CD4-positive, alpha-beta memory T cell (primary cell): ENCODE measurements at regions of chr10 and their contacts with region 1.

Region 1: DNA sequence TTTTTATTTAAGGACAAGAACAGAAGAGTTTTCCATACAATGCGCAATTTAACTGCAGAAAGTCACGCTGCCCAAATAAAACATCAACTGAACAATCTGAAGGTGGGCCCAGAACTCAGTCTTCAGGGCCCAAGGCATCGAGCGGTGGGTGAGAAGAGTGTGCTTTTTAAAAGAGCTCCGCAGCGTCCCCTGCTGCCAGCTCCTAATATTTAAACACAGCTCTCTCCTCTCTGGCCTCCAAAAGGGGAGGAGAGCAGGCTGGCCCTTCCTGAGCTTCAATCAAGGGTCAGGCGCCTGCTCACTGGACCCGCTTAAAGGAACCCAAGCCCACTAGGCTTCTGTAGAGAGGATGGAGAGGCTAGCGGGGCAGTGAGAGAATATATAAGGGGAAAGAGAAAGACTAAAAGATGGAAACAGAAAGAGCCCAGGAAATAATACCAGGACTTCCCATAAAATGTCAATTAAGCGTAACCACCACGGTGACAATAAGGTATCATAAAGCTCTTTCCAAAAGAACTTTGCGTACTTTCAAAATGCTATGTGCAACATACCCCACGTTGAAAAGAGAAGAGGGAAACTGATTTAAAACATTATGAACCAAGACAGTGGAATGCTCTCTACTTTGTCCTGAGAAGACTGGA is 2.8 kb downstream of the FAM53B start:
- DNase-seq: peak; percentile 77 to 82 (median 79)
- H3K4me3 ChIP-seq: peak overlapping the region; percentile 57 to 79
- H3K4me3 Mint-ChIP-seq: peak overlapping the region; percentile 95 to 100 (median 98)
- H3K27ac ChIP-seq: peak overlapping the region; percentile 64
- H3K27ac Mint-ChIP-seq: peak overlapping the region; percentile 87 to 97 (median 96)
- H3K4me1 ChIP-seq: peaks cover 72% of the 10 kb centered on the region
- H3K4me1 Mint-ChIP-seq: peaks cover 60 to 77% (median 69%) of the 10 kb centered on the region in 4 donors
- H3K27me3 ChIP-seq: no peaks in the 10 kb centered on the region
- H3K27me3 Mint-ChIP-seq: no peaks in the 10 kb centered on the region

Region 2: GRCh38 chr10:123994417-123995081 is 746.9 kb before region 1 on chr10:
- CTCF ChIA-PET with region 1: interaction called, 9 read pairs
- POLR2A ChIA-PET with region 1: interaction called, 5 read pairs
- intact Hi-C with region 1: loop called (anchors 2 kb)
- DNase-seq: peak; percentile 65 to 79 (median 70)
- H3K4me3 ChIP-seq: no peak overlapping the region
- H3K4me3 Mint-ChIP-seq: peak overlapping the region in 7 of 8 donors; percentile 49 to 82 (median 73)
- H3K27ac ChIP-seq: no peak overlapping the region
- H3K27ac Mint-ChIP-seq: peak overlapping the region in 1 of 7 donors; percentile 79
- H3K4me1 ChIP-seq: peaks cover 14% of the 10 kb centered on the region
- H3K4me1 Mint-ChIP-seq: peaks cover 4 to 17% (median 10%) of the 10 kb centered on the region in 4 donors
- H3K27me3 ChIP-seq: peaks cover 9% of the 10 kb centered on the region
- H3K27me3 Mint-ChIP-seq: peaks cover 38 to 62% of the 10 kb centered on the region in 2 donors

Region 3: DNA sequence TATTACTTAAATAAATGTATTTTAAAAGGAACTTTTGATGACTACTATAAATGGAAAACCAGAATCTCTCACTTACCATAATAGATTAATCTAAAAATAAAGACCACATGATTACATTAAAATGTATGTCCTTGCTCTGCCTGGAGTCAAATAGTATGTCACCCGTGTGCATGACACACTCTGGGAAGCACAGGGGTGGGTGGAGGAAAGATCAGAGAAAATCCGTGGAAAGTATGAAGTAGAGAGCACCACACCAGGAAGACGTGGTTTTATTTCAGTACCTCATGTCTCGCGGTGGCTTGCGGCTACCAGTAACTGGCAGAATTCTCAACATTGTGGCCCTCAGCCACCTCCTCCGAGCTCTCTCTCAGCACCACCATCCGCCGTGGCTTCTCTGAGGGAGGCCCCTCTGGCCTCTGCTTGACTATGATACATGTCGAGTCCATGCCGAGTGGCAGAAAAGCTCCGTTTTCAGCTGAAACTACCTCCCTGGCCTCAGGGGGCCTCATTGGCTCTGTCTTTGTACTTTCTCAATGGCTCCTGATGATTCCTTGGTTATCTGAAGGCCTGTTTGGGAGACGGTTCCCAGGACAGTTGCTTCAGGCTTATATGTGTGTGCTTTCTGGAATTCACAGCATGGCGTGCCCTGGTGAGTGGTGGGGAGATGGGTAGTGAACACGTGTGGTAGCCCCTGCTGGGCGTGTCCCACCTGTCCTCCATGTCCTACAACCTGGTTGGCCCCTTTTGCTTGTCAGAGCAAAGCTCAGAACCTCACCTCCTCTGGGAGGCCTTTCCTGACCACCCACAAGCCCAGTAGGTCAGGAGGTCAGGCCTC is 230.0 kb before region 1 on chr10:
- CTCF ChIA-PET with region 1: no interaction called
- POLR2A ChIA-PET with region 1: no interaction called
- intact Hi-C with region 1: no loop called
- DNase-seq: no peak
- H3K4me3 ChIP-seq: no peak overlapping the region
- H3K4me3 Mint-ChIP-seq: peak overlapping the region in 1 of 8 donors; percentile 55
- H3K27ac ChIP-seq: no peak overlapping the region
- H3K27ac Mint-ChIP-seq: peak overlapping the region in 2 of 7 donors; percentile 3 to 57
- H3K4me1 ChIP-seq: no peaks in the 10 kb centered on the region
- H3K4me1 Mint-ChIP-seq: peaks cover 0 to 2% (median 0%) of the 10 kb centered on the region in 4 donors
- H3K27me3 ChIP-seq: no peaks in the 10 kb centered on the region
- H3K27me3 Mint-ChIP-seq: no peaks in the 10 kb centered on the region

Region 4: DNA sequence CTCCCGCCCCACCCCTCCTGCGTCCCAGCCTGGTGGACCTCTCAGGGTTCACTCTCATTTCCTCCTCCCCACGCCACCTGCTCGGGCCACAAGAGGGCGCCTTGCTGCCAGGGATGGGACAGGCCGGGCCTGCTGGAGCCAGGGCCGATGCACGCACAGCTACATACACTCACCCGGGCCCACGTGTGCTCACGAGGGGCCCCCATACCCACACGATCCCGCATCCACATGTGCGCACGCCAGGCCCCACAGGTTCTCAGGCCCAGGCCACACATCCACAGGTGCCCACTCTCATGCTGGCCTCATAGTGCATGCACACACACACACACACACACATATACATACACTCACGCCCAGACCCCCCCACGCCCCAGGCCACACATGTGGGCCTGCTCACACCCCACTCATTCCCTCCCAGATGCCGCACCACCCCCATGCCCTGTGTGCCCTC is 211.2 kb before region 1 on chr10:
- CTCF ChIA-PET with region 1: interaction called, 256 read pairs
- POLR2A ChIA-PET with region 1: interaction called, 10 read pairs
- intact Hi-C with region 1: loop called (anchors 1 kb)
- DNase-seq: peak; percentile 81 to 84 (median 82)
- H3K4me3 ChIP-seq: no peak overlapping the region
- H3K4me3 Mint-ChIP-seq: peak overlapping the region in 4 of 8 donors; percentile 6 to 75 (median 42)
- H3K27ac ChIP-seq: no peak overlapping the region
- H3K27ac Mint-ChIP-seq: peak overlapping the region in 2 of 7 donors; percentile 81 to 82
- H3K4me1 ChIP-seq: peaks cover 8% of the 10 kb centered on the region
- H3K4me1 Mint-ChIP-seq: peaks cover 3 to 5% (median 4%) of the 10 kb centered on the region in 4 donors
- H3K27me3 ChIP-seq: no peaks in the 10 kb centered on the region
- H3K27me3 Mint-ChIP-seq: no peaks in the 10 kb centered on the region

Region 5: GRCh38 chr10:124619195-124619594 is 122.2 kb before region 1 on chr10:
- CTCF ChIA-PET with region 1: interaction called, 33 read pairs
- POLR2A ChIA-PET with region 1: interaction called, 6 read pairs
- intact Hi-C with region 1: no loop called
- DNase-seq: peak in 2 of 5 donors; percentile 25 to 39
- H3K4me3 ChIP-seq: no peak overlapping the region
- H3K4me3 Mint-ChIP-seq: peak overlapping the region in 7 of 8 donors; percentile 9 to 65 (median 36)
- H3K27ac ChIP-seq: peak overlapping the region; percentile 46
- H3K27ac Mint-ChIP-seq: peak overlapping the region; percentile 64 to 89 (median 85)
- H3K4me1 ChIP-seq: peaks cover 19% of the 10 kb centered on the region
- H3K4me1 Mint-ChIP-seq: peaks cover 17 to 51% (median 32%) of the 10 kb centered on the region in 4 donors
- H3K27me3 ChIP-seq: no peaks in the 10 kb centered on the region
- H3K27me3 Mint-ChIP-seq: no peaks in the 10 kb centered on the region

Region 6: DNA sequence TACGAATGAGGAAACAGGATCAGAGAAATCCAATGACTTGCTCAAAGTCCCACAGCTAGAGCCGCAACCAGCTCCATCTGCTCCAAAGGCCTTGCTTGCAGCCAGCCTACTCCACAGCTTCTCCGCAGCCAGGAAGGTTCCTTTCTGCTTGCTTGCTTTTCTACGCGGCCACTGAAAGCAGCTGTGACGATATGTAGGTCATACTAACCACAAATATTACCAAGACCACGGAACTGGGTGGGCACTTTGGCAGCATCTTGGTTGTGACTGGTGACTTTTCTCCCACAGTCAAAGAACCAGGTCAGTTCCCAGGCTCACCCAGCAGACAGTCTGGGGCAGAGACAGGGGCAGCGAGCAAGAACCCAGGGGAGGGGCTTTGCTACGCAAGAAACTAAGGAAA is 83.6 kb before region 1 on chr10:
- CTCF ChIA-PET with region 1: interaction called, 53 read pairs
- POLR2A ChIA-PET with region 1: interaction called, 14 read pairs
- intact Hi-C with region 1: no loop called
- DNase-seq: peak; percentile 60 to 79 (median 77)
- H3K4me3 ChIP-seq: peak overlapping the region; percentile 13 to 36
- H3K4me3 Mint-ChIP-seq: peak overlapping the region; percentile 31 to 87 (median 78)
- H3K27ac ChIP-seq: peak overlapping the region; percentile 67
- H3K27ac Mint-ChIP-seq: peak overlapping the region; percentile 88 to 98 (median 95)
- H3K4me1 ChIP-seq: peaks cover 92% of the 10 kb centered on the region
- H3K4me1 Mint-ChIP-seq: peaks cover 68 to 97% (median 84%) of the 10 kb centered on the region in 4 donors
- H3K27me3 ChIP-seq: no peaks in the 10 kb centered on the region
- H3K27me3 Mint-ChIP-seq: no peaks in the 10 kb centered on the region

Region 7: DNA sequence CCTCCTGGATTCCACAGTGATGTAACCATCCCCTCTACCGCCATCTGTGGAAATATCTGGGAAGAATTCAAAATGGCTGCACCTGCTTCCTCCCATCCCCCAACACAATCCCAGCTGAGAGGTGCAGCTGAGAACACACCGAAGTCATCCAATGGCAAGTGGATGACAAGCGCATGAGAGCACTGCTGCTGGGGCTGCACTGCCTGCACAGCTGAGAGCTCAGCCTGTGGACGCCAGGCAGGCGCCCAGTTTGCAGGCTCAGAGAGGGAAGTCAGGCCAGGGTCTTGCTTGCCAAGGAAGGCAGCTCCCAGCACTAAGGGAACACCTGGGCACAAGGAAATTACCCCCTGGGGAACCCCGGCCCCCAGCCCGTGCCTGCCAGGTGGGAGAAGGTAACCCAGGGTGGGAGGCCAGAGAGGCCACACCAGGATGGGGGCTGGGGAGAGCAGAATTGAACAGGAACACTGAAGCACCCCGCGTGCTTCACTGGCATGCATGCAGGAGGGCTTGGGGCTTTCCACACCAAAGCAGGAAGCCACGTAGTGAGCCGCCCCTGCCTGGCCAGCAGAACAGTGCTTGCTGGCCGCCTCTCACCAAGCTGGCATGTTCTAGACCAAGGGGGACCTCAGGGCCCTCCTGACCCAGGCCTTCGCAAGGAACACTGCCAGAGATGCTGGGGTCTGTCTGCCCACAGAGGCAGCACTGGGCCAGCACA is 43.4 kb before region 1 on chr10:
- CTCF ChIA-PET with region 1: interaction called, 129 read pairs
- POLR2A ChIA-PET with region 1: interaction called, 26 read pairs
- intact Hi-C with region 1: loop called (anchors 1 kb)
- DNase-seq: peak; percentile 40 to 79 (median 50)
- H3K4me3 ChIP-seq: peak overlapping the region; percentile 11 to 30
- H3K4me3 Mint-ChIP-seq: peak overlapping the region; percentile 20 to 96 (median 80)
- H3K27ac ChIP-seq: peak overlapping the region; percentile 90
- H3K27ac Mint-ChIP-seq: peak overlapping the region; percentile 92 to 99 (median 97)
- H3K4me1 ChIP-seq: peaks cover 100% of the 10 kb centered on the region
- H3K4me1 Mint-ChIP-seq: peaks cover 69 to 100% (median 93%) of the 10 kb centered on the region in 4 donors
- H3K27me3 ChIP-seq: no peaks in the 10 kb centered on the region
- H3K27me3 Mint-ChIP-seq: no peaks in the 10 kb centered on the region

Region 8: GRCh38 chr10:124755581-124755980 is 14.2 kb after region 1 on chr10:
- CTCF ChIA-PET with region 1: interaction called, 19 read pairs
- POLR2A ChIA-PET with region 1: no interaction called
- intact Hi-C with region 1: no loop called
- DNase-seq: no peak
- H3K4me3 ChIP-seq: no peak overlapping the region
- H3K4me3 Mint-ChIP-seq: no peak overlapping the region
- H3K27ac ChIP-seq: no peak overlapping the region
- H3K27ac Mint-ChIP-seq: no peak overlapping the region
- H3K4me1 ChIP-seq: no peaks in the 10 kb centered on the region
- H3K4me1 Mint-ChIP-seq: peaks cover 0 to 3% (median under 1%) of the 10 kb centered on the region in 4 donors
- H3K27me3 ChIP-seq: no peaks in the 10 kb centered on the region
- H3K27me3 Mint-ChIP-seq: no peaks in the 10 kb centered on the region